Activated T-helper 1 cell treated with anti-CD3 and anti-CD28 coated beads, Interleukin-12 subunit alpha, Interleukin-12 subunit beta, Interleukin-2, Interleukin-4 antibody, amounts not matched to agents 30 ng/mL and 10 ng/mL and 1 ng/mL, durations not matched to agents 14 hours and 24 hours and 36 hours (primary cell): ENCODE measurements at regions of chr7 and their contacts with region 1.

Region 1: DNA sequence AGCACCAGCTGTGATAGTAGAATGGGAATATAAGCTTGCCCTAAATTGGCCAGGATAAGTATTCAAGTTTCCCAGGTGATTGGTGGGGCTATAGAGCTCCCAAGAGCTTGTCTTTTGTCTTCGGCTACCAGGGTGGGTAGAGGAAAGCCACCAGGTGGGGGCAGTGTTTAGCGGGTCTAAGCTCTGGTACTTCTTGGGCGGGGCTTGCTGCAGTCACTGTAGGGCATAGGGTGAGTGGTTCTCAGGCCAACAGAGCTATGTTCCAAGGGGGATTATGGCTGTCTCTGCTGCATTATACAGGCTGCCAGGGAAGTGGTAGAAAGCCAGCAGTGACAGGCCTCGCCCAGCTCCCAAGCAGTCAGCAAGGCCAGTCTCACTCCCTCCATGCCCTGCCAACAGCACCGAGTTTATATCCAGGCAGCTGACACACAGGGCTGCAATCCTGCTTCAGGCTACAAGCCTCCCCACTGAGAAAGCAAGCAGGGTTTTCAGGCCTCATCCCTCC is 110.7 kb downstream of the ZNF467 start:
- DNase-seq: peak; percentile 43
- H3K4me3 Mint-ChIP-seq: no peak overlapping the region
- H3K27ac Mint-ChIP-seq: no peak overlapping the region
- H3K4me1 Mint-ChIP-seq: no peaks in the 10 kb centered on the region
- H3K27me3 Mint-ChIP-seq: peaks cover 45% of the 10 kb centered on the region

Region 2: GRCh38 chr7:149742075-149742701 is 79.5 kb after region 1 on chr7:
- intact Hi-C with region 1: loop called (anchors 1 kb)
- DNase-seq: peak; percentile 43
- H3K4me3 Mint-ChIP-seq: peak overlapping the region; percentile 79
- H3K27ac Mint-ChIP-seq: no peak overlapping the region
- H3K4me1 Mint-ChIP-seq: peaks cover 10% of the 10 kb centered on the region
- H3K27me3 Mint-ChIP-seq: peaks cover 37% of the 10 kb centered on the region

Region 3: DNA sequence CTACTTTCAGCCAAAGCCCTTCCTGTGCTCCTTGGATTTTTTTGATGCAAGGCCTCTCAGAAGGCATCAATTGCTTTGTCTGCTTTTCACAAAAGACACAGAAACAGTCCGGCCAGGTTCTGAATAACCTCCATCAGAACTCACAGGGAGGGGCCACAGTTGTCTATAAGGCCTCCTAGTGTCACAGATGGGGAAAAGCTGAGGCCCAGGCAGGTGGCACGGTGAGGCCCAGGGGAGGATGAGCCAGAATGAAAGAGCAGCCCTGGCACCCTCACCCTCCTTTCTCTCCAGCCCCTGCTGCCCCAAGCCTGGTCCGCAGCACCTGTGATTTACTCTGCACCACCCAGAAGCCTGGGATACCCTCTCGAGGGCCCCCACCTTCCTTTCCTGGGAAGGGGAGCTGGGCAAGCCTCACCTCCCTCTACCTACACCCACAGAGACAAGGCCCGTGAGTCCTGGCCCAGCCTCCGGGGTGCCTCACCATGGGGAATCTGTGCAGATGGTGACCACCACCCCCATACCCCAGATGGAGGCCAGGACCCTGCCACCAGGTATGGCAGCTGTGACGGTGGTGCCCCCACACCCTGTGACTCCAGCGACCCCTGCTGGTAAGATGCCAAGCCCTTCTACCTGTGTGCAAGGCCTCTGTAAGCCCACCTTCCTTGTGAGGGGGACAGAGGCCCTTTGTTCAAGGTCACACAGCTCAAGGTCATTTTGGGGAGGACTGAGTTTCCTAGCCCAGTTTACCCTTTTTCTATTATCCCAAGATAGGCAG is 136.9 kb after region 1 on chr7:
- intact Hi-C with region 1: loop called (anchors 2 kb)
- DNase-seq: no peak
- H3K4me3 Mint-ChIP-seq: no peak overlapping the region
- H3K27ac Mint-ChIP-seq: no peak overlapping the region
- H3K4me1 Mint-ChIP-seq: no peaks in the 10 kb centered on the region
- H3K27me3 Mint-ChIP-seq: no peaks in the 10 kb centered on the region